Activated naive CD4-positive, alpha-beta T cell treated with anti-CD3 and anti-CD28 coated beads, Interleukin-2, amount 10 ng/mL, durations not matched to agents 7 days and 5 days (primary cell): ENCODE measurements at regions of chr3 and their contacts with region 1.

Region 1: GRCh38 chr3:42443819-42444436 is 33.5 kb upstream of the LYZL4 start:
- DNase-seq: peak; percentile 84
- H3K4me3 Mint-ChIP-seq: no peak overlapping the region
- H3K27ac Mint-ChIP-seq: no peak overlapping the region
- H3K4me1 Mint-ChIP-seq: no peaks in the 10 kb centered on the region
- H3K27me3 Mint-ChIP-seq: peaks cover 23% of the 10 kb centered on the region

Region 2: GRCh38 chr3:42118762-42119361 is 325.1 kb before region 1 on chr3:
- CTCF ChIA-PET with region 1: interaction called, 21 read pairs
- DNase-seq: peak; percentile 51
- H3K4me3 Mint-ChIP-seq: no peak overlapping the region
- H3K27ac Mint-ChIP-seq: no peak overlapping the region
- H3K4me1 Mint-ChIP-seq: peaks cover 18% of the 10 kb centered on the region
- H3K27me3 Mint-ChIP-seq: no peaks in the 10 kb centered on the region

Region 3: GRCh38 chr3:42247576-42248027 is 196.3 kb before region 1 on chr3:
- CTCF ChIA-PET with region 1: interaction called, 103 read pairs
- DNase-seq: peak; percentile 76
- H3K4me3 Mint-ChIP-seq: no peak overlapping the region
- H3K27ac Mint-ChIP-seq: no peak overlapping the region
- H3K4me1 Mint-ChIP-seq: peaks cover 2% of the 10 kb centered on the region
- H3K27me3 Mint-ChIP-seq: peaks cover 41% of the 10 kb centered on the region

Region 4: GRCh38 chr3:42459151-42459550 is 15.2 kb after region 1 on chr3:
- CTCF ChIA-PET with region 1: no interaction called
- DNase-seq: no peak
- H3K4me3 Mint-ChIP-seq: no peak overlapping the region
- H3K27ac Mint-ChIP-seq: no peak overlapping the region
- H3K4me1 Mint-ChIP-seq: no peaks in the 10 kb centered on the region
- H3K27me3 Mint-ChIP-seq: peaks cover 12% of the 10 kb centered on the region

Region 5: DNA sequence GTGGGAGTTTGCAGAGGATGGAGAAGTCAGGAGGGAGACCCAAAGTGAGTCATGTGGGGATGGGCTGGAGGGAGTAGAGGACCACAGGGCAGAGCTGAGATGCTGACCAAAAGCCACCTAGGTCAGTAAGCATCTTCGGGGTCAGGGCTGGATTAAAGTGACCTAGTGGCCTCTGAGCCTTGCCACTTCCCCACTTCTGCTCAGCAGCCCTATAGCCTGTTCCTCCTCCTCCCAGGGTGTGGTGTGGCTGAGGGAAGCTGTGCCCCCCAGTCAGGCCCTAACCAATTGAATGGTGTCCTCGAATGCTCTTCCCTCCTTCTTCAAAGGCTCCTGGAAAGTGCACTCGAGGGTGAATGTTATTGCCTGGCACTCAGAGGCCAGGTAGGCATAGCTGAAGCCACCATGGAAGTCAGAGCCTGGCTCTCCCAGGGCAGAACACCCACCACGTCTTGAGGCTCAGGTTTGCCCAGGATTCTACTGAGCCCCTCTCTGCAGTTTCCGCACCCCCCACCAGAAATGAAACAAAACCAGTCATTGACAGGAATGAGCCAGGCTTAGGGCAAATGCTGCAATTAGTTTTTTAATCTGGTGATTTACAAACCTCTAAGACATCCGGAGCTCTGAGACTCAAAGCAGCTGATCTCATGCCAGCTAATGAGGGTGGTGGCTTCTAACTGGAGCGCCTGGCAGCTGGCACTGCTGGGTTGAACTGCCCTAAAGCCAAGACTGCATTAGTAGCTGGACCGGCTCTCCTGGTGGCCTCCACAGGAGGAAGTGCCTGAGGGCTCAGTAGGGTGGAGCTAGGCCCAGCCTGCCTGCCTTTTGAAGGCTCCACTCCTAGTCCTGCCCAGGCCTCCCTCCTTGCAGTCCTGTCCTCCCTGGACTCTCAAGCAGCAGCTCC is 32.5 kb after region 1 on chr3:
- CTCF ChIA-PET with region 1: no interaction called
- DNase-seq: no peak
- H3K4me3 Mint-ChIP-seq: no peak overlapping the region
- H3K27ac Mint-ChIP-seq: no peak overlapping the region
- H3K4me1 Mint-ChIP-seq: no peaks in the 10 kb centered on the region
- H3K27me3 Mint-ChIP-seq: peaks cover 46% of the 10 kb centered on the region